ENCODE measurements at regions of chrX and their contacts with region 1.

Region 1: DNA sequence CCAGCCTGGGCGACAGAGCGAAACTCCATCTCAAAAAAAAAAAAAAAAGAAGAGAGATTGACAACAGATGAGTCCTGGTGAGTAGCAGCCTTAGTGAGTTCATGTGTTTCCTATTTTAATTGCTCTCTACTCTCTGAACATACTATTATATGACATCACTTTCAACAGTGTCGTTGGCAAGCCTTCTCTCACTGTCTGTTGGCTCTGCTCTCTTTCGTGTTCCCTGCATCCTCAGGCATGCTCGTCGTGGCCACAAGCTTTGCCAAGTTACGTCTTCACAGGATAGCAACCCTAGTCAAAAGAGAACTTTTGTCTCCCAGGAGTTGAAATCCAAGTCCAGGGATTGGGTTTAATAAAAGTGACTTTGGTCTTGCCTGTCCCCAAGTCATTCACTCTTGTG is 117.1 kb upstream of the EGFL6 start:
- DNase-seq: no peak

Region 2: GRCh38 chrX:13440176-13440575 is 12.1 kb before region 1 on chrX:
- intact Hi-C with region 1: loop called in 1 of 2 experiments (anchors 1 kb)
- DNase-seq: no peak

Region 3: DNA sequence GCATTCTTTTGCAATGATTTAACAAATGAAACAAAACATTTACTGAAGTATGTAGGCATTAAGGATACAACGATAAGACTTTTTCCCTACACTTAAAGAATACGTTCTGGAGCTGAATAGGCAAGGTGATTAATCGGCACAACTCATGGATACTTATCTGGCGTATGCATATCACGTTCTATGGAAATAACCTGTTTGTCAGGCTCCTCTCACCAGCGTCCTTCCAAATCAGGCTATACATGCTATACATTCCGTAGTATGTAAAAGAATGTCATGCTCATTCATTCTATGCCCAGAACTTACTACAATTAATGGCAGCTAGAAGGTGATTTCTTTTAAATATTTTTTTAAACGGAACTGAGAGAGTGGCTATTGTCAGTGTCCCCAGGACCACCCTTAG is 175.0 kb after region 1 on chrX:
- intact Hi-C with region 1: no loop called
- DNase-seq: no peak

Region 4: DNA sequence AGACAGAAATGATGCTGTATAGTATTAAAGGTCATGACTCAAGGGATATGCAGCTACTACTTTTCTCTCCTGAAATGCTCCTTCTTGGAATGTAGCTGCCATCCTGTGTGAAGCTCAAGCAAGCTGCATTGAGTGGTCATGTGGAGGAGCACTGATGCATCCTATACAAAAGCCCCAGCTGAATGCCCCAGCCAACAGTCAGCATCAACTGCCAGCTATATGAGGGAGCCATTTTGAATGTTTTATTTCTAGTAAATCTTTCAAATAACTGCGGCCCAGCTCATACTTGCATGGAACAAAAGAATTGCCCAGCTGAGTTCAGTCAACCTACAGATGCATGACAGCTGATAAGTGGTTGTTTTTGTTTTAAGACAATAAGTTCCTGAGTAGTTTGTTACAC is 742.4 kb after region 1 on chrX:
- intact Hi-C with region 1: no loop called
- DNase-seq: no peak

Measured in posterior vena cava (tissue), 2 donors.